Natural killer cell (primary cell): ENCODE measurements at regions of chr15 and their contacts with region 1.

Region 1: DNA sequence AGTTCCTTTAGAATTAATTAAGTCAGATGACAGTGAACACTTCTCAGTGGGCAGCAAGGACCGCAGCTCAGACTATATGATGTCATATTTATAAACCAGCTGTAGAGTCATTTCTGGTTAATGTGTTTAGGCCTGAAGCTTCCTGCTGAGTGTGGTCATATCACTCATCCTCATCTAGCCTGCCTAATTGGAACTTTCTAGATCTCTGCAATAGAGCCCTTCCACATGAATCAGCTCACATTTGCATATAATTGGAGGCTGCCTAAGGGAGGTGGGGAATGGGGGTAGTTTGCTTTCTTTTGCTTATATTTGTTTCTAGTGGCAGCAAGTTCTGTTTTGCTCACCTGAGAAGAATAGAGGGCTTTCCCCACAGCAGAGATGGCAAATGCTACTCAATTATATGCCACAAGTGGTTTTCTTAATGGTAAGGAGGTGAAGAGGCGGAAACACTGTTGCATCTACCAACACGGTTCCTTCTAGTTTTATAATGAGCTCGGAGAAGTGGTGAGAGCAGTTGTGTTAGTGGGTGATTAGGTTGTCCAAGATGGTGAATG is 148.1 kb downstream of the KLHL25 start:
- DNase-seq: peak; percentile 50 to 82
- ATAC-seq: peak; percentile 71 to 88 (median 83)
- H3K4me3 ChIP-seq: no peak overlapping the region
- H3K4me3 Mint-ChIP-seq: peak overlapping the region; percentile 79
- H3K27ac ChIP-seq: peak overlapping the region; percentile 85
- H3K27ac Mint-ChIP-seq: peak overlapping the region; percentile 91 to 94
- H3K4me1 ChIP-seq: peaks cover 44% of the 10 kb centered on the region
- H3K4me1 Mint-ChIP-seq: peaks cover 46 to 48% of the 10 kb centered on the region in 2 donors
- H3K27me3 ChIP-seq: no peaks in the 10 kb centered on the region
- H3K27me3 Mint-ChIP-seq: no peaks in the 10 kb centered on the region
- CTCF ChIP-seq: no peak

Region 2: DNA sequence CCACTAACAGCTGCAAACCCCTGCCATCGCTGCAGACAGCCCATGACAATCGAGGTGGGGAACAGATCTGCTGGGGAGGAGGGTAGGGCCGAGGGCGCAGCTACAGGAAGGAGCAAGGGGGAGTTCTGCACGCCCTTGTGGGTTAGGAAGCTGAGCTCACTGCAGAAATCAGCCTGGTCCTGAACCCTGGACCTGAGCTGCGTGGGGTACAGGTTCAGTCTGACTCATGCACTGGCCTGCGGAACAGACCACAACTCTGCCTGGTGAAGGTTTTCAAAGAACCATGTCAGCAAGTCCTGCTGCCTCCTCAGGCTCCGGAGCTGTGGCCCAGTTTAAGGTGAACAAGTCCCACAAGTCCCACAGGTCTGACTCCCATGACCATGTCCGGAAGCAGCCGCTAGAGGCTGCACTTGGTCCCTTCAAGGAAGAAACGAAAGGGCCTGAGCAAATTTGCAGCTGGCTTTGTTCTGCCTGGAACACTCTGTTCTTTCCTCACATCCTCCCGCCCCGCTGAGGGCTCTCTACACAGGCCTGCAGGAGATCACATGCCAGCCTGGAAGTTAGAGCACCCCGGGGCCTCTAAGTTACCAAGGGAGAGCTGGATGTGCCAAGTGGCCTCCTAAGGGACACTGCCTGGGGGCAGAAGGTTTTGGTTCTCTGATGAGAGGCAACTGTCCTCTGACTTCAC is 315.6 kb before region 1 on chr15:
- intact Hi-C with region 1: no loop called
- DNase-seq: peak; percentile 37 to 83
- ATAC-seq: peak; percentile 70 to 81 (median 79)
- H3K4me3 ChIP-seq: peak overlapping the region; percentile 2
- H3K4me3 Mint-ChIP-seq: peak overlapping the region; percentile 95
- H3K27ac ChIP-seq: peak overlapping the region; percentile 87
- H3K27ac Mint-ChIP-seq: peak overlapping the region; percentile 55 to 91
- H3K4me1 ChIP-seq: peaks cover 29% of the 10 kb centered on the region
- H3K4me1 Mint-ChIP-seq: peaks cover 24 to 27% of the 10 kb centered on the region in 2 donors
- H3K27me3 ChIP-seq: no peaks in the 10 kb centered on the region
- H3K27me3 Mint-ChIP-seq: no peaks in the 10 kb centered on the region
- CTCF ChIP-seq: peak; percentile 49

Region 3: GRCh38 chr15:85543741-85544155 is 102.9 kb before region 1 on chr15:
- intact Hi-C with region 1: loop called (anchors 2 kb)
- DNase-seq: peak; percentile 47 to 73
- ATAC-seq: peak; percentile 80 to 88 (median 86)
- H3K4me3 ChIP-seq: peak overlapping the region; percentile 14
- H3K4me3 Mint-ChIP-seq: peak overlapping the region; percentile 84
- H3K27ac ChIP-seq: peak overlapping the region; percentile 53
- H3K27ac Mint-ChIP-seq: peak overlapping the region; percentile 83 to 91
- H3K4me1 ChIP-seq: peaks cover 10% of the 10 kb centered on the region
- H3K4me1 Mint-ChIP-seq: peaks cover 53 to 54% of the 10 kb centered on the region in 2 donors
- H3K27me3 ChIP-seq: no peaks in the 10 kb centered on the region
- H3K27me3 Mint-ChIP-seq: no peaks in the 10 kb centered on the region
- CTCF ChIP-seq: peak; percentile 8

Region 4: GRCh38 chr15:85607842-85608241 is 38.8 kb before region 1 on chr15:
- intact Hi-C with region 1: loop called (anchors 5 kb)
- DNase-seq: no peak
- ATAC-seq: no peak
- H3K4me3 ChIP-seq: no peak overlapping the region
- H3K4me3 Mint-ChIP-seq: no peak overlapping the region
- H3K27ac ChIP-seq: no peak overlapping the region
- H3K27ac Mint-ChIP-seq: no peak overlapping the region
- H3K4me1 ChIP-seq: no peaks in the 10 kb centered on the region
- H3K4me1 Mint-ChIP-seq: peaks cover 15 to 19% of the 10 kb centered on the region in 2 donors
- H3K27me3 ChIP-seq: no peaks in the 10 kb centered on the region
- H3K27me3 Mint-ChIP-seq: no peaks in the 10 kb centered on the region
- CTCF ChIP-seq: no peak

Region 5: GRCh38 chr15:85667491-85668424 is 21.1 kb after region 1 on chr15:
- intact Hi-C with region 1: loop called (anchors 1 kb)
- DNase-seq: peak; percentile 42 to 94
- ATAC-seq: peak; percentile 86 to 92 (median 92)
- H3K4me3 ChIP-seq: no peak overlapping the region
- H3K4me3 Mint-ChIP-seq: peak overlapping the region; percentile 75
- H3K27ac ChIP-seq: peak overlapping the region; percentile 100
- H3K27ac Mint-ChIP-seq: peak overlapping the region; percentile 99
- H3K4me1 ChIP-seq: peaks cover 9% of the 10 kb centered on the region
- H3K4me1 Mint-ChIP-seq: peaks cover 21 to 22% of the 10 kb centered on the region in 2 donors
- H3K27me3 ChIP-seq: no peaks in the 10 kb centered on the region
- H3K27me3 Mint-ChIP-seq: no peaks in the 10 kb centered on the region
- CTCF ChIP-seq: no peak

Region 6: DNA sequence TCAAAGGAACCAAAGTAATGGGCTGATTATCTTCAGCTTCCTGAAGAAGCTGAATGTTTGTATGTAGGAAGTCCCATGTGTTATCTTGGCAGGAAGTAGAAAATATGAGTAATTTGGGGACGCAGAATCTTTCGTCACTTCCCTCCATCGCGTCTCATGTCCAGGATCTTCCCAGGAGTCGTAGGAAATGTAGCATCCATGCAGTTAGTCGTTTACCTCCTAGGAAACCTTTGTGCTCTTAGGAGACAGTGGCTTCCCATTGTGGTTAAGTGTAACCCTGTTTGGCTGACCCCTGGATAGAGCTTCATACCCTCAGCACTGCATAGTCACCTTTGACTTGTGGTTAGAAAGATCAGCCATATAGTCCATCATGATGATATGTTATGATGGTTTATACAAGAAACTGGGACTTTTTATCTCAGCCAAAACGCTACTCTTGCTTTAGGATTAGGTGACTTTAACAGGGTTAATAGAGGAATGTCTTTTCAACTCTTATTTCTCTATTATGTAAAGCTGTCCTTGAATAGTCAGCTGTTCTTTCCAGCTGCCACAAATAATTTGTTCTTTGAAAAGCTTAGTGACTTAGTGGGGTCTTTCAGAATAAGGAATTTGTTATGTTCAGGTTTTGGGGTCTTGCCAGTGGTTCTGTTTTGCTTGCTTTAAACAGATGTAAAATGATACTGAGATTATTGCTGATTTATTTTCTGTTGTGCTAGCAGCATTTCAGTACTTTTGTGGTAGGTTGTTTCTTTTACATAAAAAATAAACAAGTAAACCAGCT is 55.9 kb after region 1 on chr15:
- intact Hi-C with region 1: loop called (anchors 1 kb)
- DNase-seq: peak; percentile 54 to 81
- ATAC-seq: peak; percentile 56 to 68 (median 59)
- H3K4me3 ChIP-seq: peak overlapping the region; percentile 11
- H3K4me3 Mint-ChIP-seq: peak overlapping the region; percentile 89
- H3K27ac ChIP-seq: peak overlapping the region; percentile 98
- H3K27ac Mint-ChIP-seq: peak overlapping the region; percentile 100
- H3K4me1 ChIP-seq: peaks cover 56% of the 10 kb centered on the region
- H3K4me1 Mint-ChIP-seq: peaks cover 72 to 78% of the 10 kb centered on the region in 2 donors
- H3K27me3 ChIP-seq: no peaks in the 10 kb centered on the region
- H3K27me3 Mint-ChIP-seq: no peaks in the 10 kb centered on the region
- CTCF ChIP-seq: no peak